ENCODE measurements at regions of chr6 and their contacts with region 1.

Region 1: DNA sequence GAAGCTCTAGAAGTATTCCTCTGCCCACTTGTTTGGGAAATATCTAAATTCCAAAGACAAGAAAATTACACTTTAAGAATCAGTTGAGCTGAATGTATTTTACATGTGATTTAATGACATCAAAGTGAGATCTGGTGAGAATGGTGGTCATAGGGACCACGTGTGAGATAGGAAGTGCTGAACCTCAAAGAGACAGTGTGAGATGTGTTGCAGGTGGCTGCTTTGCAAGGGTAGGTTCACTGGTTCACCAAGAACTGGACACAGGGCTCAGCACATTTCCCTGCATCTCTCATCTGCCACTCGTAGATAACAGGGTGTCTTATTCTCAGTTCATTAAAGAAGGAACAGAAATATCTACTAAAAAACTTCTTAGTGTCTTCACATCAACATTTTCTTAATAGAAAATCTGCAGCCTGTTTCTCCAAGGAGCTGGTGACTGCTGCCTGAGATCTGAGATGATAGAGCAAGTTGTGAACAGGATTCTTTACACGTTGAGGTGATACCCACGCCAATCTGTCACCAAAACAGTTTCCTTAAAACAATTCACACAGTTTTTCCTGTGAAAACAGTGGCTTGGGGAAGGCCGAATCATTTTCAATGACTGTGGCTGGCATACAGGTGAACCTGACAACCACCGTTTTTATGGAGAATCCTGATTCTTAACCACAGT is 7.2 kb downstream of the CCR6 start:
- DNase-seq: no peak
- ATAC-seq: peak; percentile 71
- H3K4me3 ChIP-seq: peak overlapping the region; percentile 1; the same call in 1 of the 2 replicates
- H3K27ac ChIP-seq: peak overlapping the region; percentile 47
- H3K4me1 ChIP-seq: peaks cover 21% of the 10 kb centered on the region
- H3K27me3 ChIP-seq: no peaks in the 10 kb centered on the region
- CTCF ChIP-seq: no peak
- EP300 ChIP-seq: no peak
- POLR2A ChIP-seq: no peak
- RAD21 ChIP-seq: no peak

Region 2: GRCh38 chr6:166775180-166776081 is 354.7 kb before region 1 on chr6:
- CTCF ChIA-PET with region 1: no interaction called
- POLR2A ChIA-PET with region 1: no interaction called
- RAD21 ChIA-PET with region 1: no interaction called
- SMC1A ChIA-PET with region 1: interaction called, 4 read pairs
- in situ Hi-C with region 1: loop called (anchors 10 kb)
- intact Hi-C with region 1: no loop called
- DNase-seq: no peak
- ATAC-seq: peak; percentile 94
- H3K4me3 ChIP-seq: no peak overlapping the region
- H3K27ac ChIP-seq: no peak overlapping the region
- H3K4me1 ChIP-seq: no peaks in the 10 kb centered on the region
- H3K27me3 ChIP-seq: peaks cover 0 to 2% of the 10 kb centered on the region in 2 experiments; a peak in 1 of 4 replicates
- CTCF ChIP-seq: peak; percentile 84 to 91 (median 88)
- EP300 ChIP-seq: no peak
- POLR2A ChIP-seq: no peak
- RAD21 ChIP-seq: peak; percentile 96

Region 3: GRCh38 chr6:167047554-167047953 is 82.6 kb before region 1 on chr6:
- CTCF ChIA-PET with region 1: interaction called, 9 read pairs
- POLR2A ChIA-PET with region 1: interaction called, 5 read pairs
- RAD21 ChIA-PET with region 1: interaction called, 25 read pairs
- SMC1A ChIA-PET with region 1: interaction called, 11 read pairs
- in situ Hi-C with region 1: no loop called
- intact Hi-C with region 1: no loop called
- DNase-seq: peak; percentile 86
- ATAC-seq: peak; percentile 87
- H3K4me3 ChIP-seq: peak overlapping the region; percentile 36; the same call in 1 of the 2 replicates
- H3K27ac ChIP-seq: peak overlapping the region; percentile 89
- H3K4me1 ChIP-seq: peaks cover 36% of the 10 kb centered on the region
- H3K27me3 ChIP-seq: no peaks in the 10 kb centered on the region
- CTCF ChIP-seq: no peak
- EP300 ChIP-seq: peak; percentile 74 to 77; a peak in 3 of 4 replicates
- POLR2A ChIP-seq: no peak
- RAD21 ChIP-seq: no peak

Region 4: DNA sequence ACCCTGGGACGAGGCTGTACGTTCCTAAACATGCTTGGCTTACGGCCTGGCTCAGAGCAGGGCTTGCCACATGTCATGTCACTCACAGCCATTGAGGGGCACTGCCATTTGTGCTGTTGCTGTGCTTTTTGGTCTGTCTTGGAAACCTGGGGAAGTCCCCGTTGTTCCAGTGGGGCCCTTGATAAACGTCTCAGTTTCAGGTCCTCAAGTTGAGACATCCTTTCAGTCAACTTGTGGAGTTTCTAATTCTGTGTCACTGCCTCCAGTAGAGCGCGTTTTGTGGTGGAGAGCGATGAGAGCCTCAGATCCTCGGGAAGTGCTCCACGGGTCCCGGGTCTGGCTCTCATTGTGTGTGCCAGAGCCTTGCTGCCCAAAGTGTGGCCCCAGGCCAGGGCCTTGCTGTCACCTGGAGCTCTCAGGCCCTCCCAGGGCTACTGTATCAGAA is 50.3 kb before region 1 on chr6:
- CTCF ChIA-PET with region 1: interaction called, 5 read pairs
- POLR2A ChIA-PET with region 1: no interaction called
- RAD21 ChIA-PET with region 1: no interaction called
- SMC1A ChIA-PET with region 1: interaction called, 9 read pairs
- in situ Hi-C with region 1: no loop called
- intact Hi-C with region 1: loop called (anchors 2 kb)
- DNase-seq: peak; percentile 93
- ATAC-seq: peak; percentile 99
- H3K4me3 ChIP-seq: no peak overlapping the region
- H3K27ac ChIP-seq: peak overlapping the region; percentile 79
- H3K4me1 ChIP-seq: peaks cover 31% of the 10 kb centered on the region
- H3K27me3 ChIP-seq: no peaks in the 10 kb centered on the region
- CTCF ChIP-seq: peak; percentile 70 to 81 (median 74)
- EP300 ChIP-seq: peak; percentile 64 to 84; a peak in 2 of 4 replicates
- POLR2A ChIP-seq: no peak
- RAD21 ChIP-seq: peak; percentile 83

Region 5: GRCh38 chr6:167103041-167103891 is 26.9 kb before region 1 on chr6:
- CTCF ChIA-PET with region 1: interaction called, 4 read pairs
- POLR2A ChIA-PET with region 1: interaction called, 4 read pairs
- RAD21 ChIA-PET with region 1: interaction called, 4 read pairs
- SMC1A ChIA-PET with region 1: interaction called, 10 read pairs
- in situ Hi-C with region 1: no loop called
- intact Hi-C with region 1: no loop called
- DNase-seq: no peak
- ATAC-seq: peak; percentile 92
- H3K4me3 ChIP-seq: no peak overlapping the region
- H3K27ac ChIP-seq: peak overlapping the region; percentile 60
- H3K4me1 ChIP-seq: peaks cover 31% of the 10 kb centered on the region
- H3K27me3 ChIP-seq: no peaks in the 10 kb centered on the region
- CTCF ChIP-seq: no peak
- EP300 ChIP-seq: peak; percentile 34 to 56; a peak in 2 of 4 replicates
- POLR2A ChIP-seq: no peak
- RAD21 ChIP-seq: no peak

Region 6: DNA sequence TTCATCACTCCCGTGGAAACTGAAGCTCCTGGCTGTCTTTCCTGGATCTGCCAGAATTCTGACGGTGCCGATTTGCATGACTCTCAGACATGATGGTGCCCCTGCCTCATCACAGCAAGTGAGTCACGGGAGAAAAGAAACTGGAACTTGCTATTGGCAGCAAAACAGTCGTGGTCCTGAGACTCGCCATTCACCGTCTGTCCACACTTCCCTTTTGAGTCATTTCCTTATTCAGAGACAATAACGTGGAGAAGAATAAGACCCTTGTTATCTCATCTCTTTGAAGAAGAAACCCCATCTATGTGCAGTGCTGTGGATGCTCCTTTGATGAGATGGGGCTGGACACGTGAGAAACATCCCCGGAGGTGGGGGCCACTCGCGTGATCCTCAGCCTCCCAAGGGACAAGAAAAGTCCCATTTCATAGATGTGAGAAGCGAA is 23.4 kb after region 1 on chr6:
- CTCF ChIA-PET with region 1: interaction called, 4 read pairs
- POLR2A ChIA-PET with region 1: interaction called, 6 read pairs
- RAD21 ChIA-PET with region 1: interaction called, 22 read pairs
- SMC1A ChIA-PET with region 1: interaction called, 36 read pairs
- in situ Hi-C with region 1: no loop called
- intact Hi-C with region 1: loop called (anchors 1 kb)
- DNase-seq: peak; percentile 78
- ATAC-seq: peak; percentile 71
- H3K4me3 ChIP-seq: peak overlapping the region; percentile 54
- H3K27ac ChIP-seq: peak overlapping the region; percentile 70
- H3K4me1 ChIP-seq: peaks cover 30% of the 10 kb centered on the region
- H3K27me3 ChIP-seq: no peaks in the 10 kb centered on the region; a peak in 1 of 4 replicates
- CTCF ChIP-seq: no peak
- EP300 ChIP-seq: peak; percentile 81; a peak in 3 of 4 replicates
- POLR2A ChIP-seq: no peak
- RAD21 ChIP-seq: no peak